H1 (cell line): ENCODE measurements at regions of chr15 and their contacts with region 1.

Region 1: GRCh38 chr15:78709263-78709882 is 68.4 kb upstream of the CHRNB4 start:
- DNase-seq: peak in 1 of 2 experiments; percentile 94
- H3K4me3 ChIP-seq: no peak overlapping the region
- H3K27ac ChIP-seq: no peak overlapping the region
- H3K4me1 ChIP-seq: peaks cover 0 to 5% (median 0%) of the 10 kb centered on the region in 4 experiments; a peak in 2 of 7 replicates
- H3K27me3 ChIP-seq: peaks cover 0 to 3% (median 1%) of the 10 kb centered on the region in 4 experiments; a peak in 2 of 7 replicates
- CTCF ChIP-seq: peak; percentile 86 to 96 (median 88)
- EP300 ChIP-seq: no peak
- POLR2A ChIP-seq: no peak
- RAD21 ChIP-seq: peak; percentile 97 to 99

Region 2: DNA sequence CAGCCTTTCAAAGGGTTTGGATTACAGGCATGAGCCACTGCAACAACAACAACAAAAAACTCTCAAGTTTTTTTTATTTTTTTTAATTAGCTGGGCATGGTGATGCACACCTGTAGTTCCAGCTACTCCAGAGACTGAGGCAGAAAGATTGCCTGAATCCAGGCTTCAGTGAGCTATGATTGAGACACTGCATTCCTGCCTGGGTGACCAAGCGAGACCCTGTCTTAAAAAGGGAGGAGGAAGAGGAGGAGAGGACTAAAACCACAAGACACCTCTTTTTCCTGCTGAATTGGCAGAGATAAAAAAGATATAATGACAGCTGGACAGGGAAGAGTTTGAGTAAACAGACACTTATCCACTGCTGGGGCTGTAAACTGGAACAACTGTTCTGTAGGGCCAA is 45.7 kb before region 1 on chr15:
- CTCF ChIA-PET with region 1: interaction called, 10 read pairs
- POLR2A ChIA-PET with region 1: no interaction called
- DNase-seq: no peak
- H3K4me3 ChIP-seq: no peak overlapping the region
- H3K27ac ChIP-seq: no peak overlapping the region
- H3K4me1 ChIP-seq: no peaks in the 10 kb centered on the region
- H3K27me3 ChIP-seq: no peaks in the 10 kb centered on the region; a peak in 1 of 7 replicates
- CTCF ChIP-seq: no peak
- EP300 ChIP-seq: no peak
- POLR2A ChIP-seq: no peak
- RAD21 ChIP-seq: no peak

Region 3: DNA sequence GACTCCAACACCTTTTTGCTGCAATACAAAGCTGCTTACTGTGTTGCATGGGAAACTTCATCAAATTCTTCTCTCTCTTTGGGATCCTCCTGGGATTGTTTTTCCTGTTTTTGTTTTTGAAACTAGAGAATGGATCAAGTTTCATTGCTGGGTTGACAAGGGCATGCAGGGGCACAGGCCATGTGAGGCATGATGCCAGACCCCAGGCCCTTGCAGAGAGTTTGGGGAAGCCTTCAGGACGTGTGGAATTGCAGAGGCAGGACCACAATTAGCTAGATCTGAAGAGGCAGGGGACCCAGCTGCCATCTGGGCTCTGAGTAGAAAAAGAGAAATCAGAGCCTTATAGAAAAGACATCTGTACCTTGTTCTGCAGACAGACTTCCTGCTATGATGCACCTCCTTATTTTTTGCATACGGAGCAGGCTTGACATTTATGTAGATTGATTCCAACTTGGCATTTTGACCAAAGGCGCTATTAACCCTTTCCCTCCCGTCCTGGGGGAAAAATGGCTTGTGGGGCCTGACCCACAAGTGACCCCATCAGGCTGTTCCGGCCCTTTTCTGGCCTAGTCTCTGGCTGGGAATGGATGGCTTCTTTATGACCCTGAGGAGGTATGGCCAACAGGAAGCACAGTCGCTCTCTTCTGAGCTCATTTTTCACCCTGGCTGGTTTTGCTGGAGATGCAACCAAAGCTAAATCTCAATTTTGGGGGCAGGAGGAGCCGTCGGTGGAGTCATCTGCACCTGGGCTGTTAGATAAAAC is 24.0 kb before region 1 on chr15:
- CTCF ChIA-PET with region 1: interaction called, 45 read pairs
- POLR2A ChIA-PET with region 1: no interaction called
- DNase-seq: peak in 1 of 2 experiments; percentile 50
- H3K4me3 ChIP-seq: no peak overlapping the region
- H3K27ac ChIP-seq: no peak overlapping the region
- H3K4me1 ChIP-seq: peaks cover 9 to 18% (median 16%) of the 10 kb centered on the region in 4 experiments
- H3K27me3 ChIP-seq: no peaks in the 10 kb centered on the region
- CTCF ChIP-seq: no peak
- EP300 ChIP-seq: no peak
- POLR2A ChIP-seq: no peak
- RAD21 ChIP-seq: no peak

Region 4: DNA sequence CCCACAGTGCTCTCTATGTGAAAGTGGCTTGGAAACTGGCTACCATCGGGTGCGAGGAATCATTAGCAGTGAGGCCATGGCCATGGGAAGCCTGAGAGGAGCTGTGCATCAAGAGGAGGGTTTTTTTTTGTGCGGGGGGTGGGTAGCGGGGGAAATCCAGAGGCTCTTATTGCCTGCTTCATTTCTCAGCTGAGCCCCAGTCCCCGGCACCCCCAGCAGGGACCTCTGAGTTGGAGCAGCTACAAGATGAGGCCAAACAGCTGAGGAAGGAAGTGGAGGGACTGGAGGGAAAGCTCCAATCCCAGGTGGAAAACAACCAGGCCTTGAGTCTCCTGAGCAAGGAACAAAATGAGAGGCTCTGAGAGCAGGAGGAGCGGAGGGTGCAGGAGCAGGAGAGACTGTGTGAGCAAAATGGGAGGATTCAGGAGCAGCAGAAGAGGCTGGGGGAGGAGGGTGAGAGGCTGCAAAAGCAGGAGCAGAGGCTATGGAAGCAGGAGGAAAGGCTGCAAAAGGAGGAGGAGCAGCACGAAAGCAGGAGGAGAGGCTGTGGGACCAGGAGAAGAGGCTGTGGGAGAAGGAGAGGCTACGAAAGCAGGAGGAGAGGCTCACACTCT is 25.2 kb after region 1 on chr15:
- CTCF ChIA-PET with region 1: interaction called, 30 read pairs
- POLR2A ChIA-PET with region 1: no interaction called
- DNase-seq: no peak
- H3K4me3 ChIP-seq: no peak overlapping the region
- H3K27ac ChIP-seq: no peak overlapping the region
- H3K4me1 ChIP-seq: no peaks in the 10 kb centered on the region; a peak in 1 of 7 replicates
- H3K27me3 ChIP-seq: no peaks in the 10 kb centered on the region; a peak in 1 of 7 replicates
- CTCF ChIP-seq: no peak
- EP300 ChIP-seq: no peak
- POLR2A ChIP-seq: no peak
- RAD21 ChIP-seq: no peak